ENCODE measurements at regions of chr3 and their contacts with region 1.

Region 1: DNA sequence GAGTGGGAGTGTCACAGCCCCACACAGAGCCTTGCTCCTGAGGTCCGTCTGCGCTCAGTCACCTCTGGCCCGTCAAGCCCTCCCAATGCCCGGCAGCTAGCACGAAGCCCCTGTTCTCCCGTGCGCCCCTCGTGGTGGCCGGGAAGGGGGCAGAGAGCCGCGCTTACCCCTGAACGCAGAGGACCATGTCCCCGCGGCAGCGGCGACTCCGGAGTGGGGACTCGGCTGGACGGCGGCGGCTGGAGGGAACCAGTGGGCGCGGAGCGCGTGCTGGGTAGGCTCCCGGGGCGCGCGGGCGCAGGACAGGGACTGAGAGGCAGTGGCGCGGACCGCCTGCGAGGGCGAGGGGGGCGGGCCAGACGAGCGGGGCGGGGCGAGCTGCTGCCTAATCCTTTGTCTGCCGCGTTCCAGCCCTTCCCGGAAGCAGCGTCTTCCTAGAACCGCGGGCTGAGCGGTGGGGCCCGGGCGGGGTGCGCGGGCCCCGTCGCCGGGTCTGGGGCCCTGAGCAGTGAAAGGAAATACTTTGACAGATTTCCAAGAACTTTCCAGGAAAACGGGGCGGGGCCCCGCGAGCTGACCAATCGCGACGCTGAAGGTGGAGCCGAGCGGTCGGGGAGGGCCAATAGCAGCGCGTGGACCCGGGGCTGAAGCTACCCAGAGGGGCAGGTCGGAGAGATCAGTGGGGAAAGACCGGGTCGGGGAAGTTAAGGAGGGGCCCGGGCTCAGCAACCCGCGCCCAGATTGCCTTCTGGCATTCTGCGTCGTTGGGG is at the start of gene CISH:
- DNase-seq: no peak
- ATAC-seq: peak; percentile 79
- H3K4me3 ChIP-seq: peak within 1 kb of the TSS; percentile 54 to 64
- H3K27ac ChIP-seq: peak within 1 kb of the TSS; percentile 62
- H3K4me1 ChIP-seq: peaks cover 14 to 37% of the 10 kb centered on the region in 2 experiments
- H3K27me3 ChIP-seq: no peaks in the 10 kb centered on the region
- CTCF ChIP-seq: peak in 2 of 3 experiments; percentile 44 to 56; a peak in 4 of 6 replicates
- POLR2A ChIP-seq: peak; percentile 31
- RAD21 ChIP-seq: no peak
- total RNA-seq, gene CISH: 4.5 TPM

Region 2: DNA sequence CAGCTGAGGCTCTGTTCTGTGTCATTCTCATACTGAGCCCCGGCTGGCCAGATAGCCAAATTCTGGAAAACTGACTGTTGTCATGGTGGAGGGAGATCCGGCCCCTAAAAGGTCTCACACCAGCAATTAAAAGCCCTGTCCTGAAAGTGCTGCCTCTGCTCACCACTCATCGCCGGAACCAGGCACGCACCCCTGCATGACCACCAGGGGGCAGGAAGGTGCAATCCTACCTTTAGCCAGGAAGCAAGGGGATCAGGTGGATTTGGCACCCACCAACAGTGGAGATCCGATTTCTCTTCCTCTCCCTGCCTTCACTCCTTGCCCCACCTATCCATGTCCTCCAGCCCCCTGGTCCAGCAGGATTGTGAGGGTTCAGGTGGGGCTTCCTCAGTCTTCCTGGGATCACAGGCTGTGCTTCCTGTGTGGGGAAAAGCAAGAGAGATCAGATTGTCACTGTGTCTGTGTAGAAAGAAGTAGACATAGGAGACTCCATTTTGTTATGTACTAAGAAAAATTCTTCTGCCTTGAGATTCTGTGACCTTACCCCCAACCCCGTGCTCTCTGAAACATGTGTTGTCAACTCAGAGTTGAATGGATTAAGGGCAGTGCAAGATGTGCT is 92.1 kb before region 1 on chr3:
- CTCF ChIA-PET with region 1: interaction called, 3 read pairs
- POLR2A ChIA-PET with region 1: no interaction called
- RAD21 ChIA-PET with region 1: no interaction called
- intact Hi-C with region 1: loop called (anchors 1 kb)
- DNase-seq: peak; percentile 60
- ATAC-seq: peak; percentile 97
- H3K4me3 ChIP-seq: no peak overlapping the region
- H3K27ac ChIP-seq: no peak overlapping the region
- H3K4me1 ChIP-seq: peaks cover 0 to 6% of the 10 kb centered on the region in 2 experiments; a peak in 1 of 4 replicates
- H3K27me3 ChIP-seq: peaks cover 7% of the 10 kb centered on the region; the same call in 1 of the 2 replicates
- CTCF ChIP-seq: peak; percentile 89 to 97 (median 97)
- POLR2A ChIP-seq: no peak
- RAD21 ChIP-seq: peak; percentile 76

Region 3: DNA sequence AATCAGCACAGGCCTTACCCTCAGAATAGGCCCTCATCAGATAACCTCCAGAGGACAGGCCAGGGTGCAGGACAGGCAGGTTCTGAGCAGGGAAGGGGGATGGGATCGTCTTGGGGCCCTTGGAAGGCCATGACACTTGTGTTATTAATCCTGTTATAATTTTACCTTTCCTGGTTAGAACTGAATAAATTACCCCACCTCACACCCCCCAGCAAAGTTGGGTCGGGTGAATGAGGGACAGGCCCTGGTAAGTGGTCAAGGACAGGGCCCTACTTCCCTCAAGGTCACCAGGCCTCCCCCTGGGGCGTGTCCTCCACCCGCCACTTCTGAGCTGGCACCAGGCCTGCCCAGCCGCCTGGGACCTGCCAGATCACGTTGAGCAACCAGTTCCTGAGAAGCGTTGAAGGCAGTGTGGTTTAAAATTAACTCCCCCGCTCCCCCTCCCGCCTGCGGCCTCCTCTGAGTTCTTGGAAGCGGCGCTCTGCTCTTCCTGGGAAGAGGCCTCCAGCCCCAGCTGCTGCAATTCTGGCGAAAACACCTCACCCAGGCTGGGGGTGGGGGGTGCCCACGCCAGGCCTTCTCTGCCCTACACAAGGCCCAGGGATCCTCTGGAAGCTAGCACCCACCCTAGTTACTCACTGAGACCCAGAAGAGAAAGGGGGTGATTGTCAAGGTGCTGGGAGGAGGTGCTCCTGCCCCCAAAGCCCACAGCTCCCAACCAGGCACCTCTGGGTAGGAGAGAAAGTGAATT is 10.6 kb before region 1 on chr3:
- CTCF ChIA-PET with region 1: interaction called, 18 read pairs
- POLR2A ChIA-PET with region 1: interaction called, 7 read pairs
- RAD21 ChIA-PET with region 1: interaction called, 3 to 7 read pairs
- intact Hi-C with region 1: no loop called
- DNase-seq: peak; percentile 77
- ATAC-seq: peak; percentile 81
- H3K4me3 ChIP-seq: peak overlapping the region; percentile 25 to 35
- H3K27ac ChIP-seq: peak overlapping the region; percentile 98
- H3K4me1 ChIP-seq: peaks cover 37 to 40% of the 10 kb centered on the region in 2 experiments
- H3K27me3 ChIP-seq: no peaks in the 10 kb centered on the region
- CTCF ChIP-seq: no peak
- POLR2A ChIP-seq: no peak
- RAD21 ChIP-seq: no peak

Region 4: DNA sequence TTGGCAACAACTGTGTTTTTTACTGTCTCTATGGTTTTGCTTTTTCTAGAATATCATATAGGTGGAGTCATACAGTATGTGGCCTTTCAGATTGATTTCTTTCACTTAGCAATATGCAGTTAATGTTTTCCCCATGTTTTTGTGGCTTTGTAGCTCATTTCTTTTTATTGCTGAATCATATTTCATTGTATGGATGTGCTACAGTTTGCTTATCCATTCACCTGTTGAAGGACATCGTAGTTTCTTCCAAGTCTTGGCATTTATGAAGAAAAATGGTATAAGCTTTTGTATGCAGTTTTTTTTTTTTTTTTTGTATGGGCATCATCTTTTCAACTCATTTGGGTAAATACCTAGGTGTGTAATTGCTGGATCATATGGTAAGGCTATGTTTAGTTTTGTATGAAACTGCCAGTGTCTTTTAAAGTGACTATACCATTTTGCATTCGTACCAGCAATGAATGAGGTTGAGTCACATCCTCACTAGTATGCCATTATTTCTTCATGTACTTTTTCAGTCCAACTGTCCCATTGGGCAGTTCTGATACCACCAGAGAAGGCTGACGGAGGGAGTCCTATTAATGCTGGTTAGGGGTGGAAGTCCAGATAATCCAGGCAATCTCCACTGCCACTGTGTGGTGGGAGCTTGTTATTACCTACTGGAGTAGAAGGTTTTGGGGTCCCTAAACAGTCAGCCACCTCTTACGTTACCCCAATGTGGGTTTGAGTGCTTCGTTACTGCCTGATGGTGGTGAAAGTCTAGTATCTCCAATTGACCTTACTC is 273.6 kb after region 1 on chr3:
- CTCF ChIA-PET with region 1: no interaction called
- POLR2A ChIA-PET with region 1: no interaction called
- RAD21 ChIA-PET with region 1: no interaction called
- intact Hi-C with region 1: loop called (anchors 5 kb)
- DNase-seq: no peak
- ATAC-seq: no peak; the same call in 1 of the 2 replicates
- H3K4me3 ChIP-seq: no peak overlapping the region
- H3K27ac ChIP-seq: no peak overlapping the region
- H3K4me1 ChIP-seq: no peaks in the 10 kb centered on the region
- H3K27me3 ChIP-seq: no peaks in the 10 kb centered on the region
- CTCF ChIP-seq: peak in 2 of 3 experiments; percentile 28 to 46; a peak in 2 of 6 replicates
- POLR2A ChIP-seq: no peak
- RAD21 ChIP-seq: peak; percentile 47; the same call in 1 of the 2 replicates

Region 5: DNA sequence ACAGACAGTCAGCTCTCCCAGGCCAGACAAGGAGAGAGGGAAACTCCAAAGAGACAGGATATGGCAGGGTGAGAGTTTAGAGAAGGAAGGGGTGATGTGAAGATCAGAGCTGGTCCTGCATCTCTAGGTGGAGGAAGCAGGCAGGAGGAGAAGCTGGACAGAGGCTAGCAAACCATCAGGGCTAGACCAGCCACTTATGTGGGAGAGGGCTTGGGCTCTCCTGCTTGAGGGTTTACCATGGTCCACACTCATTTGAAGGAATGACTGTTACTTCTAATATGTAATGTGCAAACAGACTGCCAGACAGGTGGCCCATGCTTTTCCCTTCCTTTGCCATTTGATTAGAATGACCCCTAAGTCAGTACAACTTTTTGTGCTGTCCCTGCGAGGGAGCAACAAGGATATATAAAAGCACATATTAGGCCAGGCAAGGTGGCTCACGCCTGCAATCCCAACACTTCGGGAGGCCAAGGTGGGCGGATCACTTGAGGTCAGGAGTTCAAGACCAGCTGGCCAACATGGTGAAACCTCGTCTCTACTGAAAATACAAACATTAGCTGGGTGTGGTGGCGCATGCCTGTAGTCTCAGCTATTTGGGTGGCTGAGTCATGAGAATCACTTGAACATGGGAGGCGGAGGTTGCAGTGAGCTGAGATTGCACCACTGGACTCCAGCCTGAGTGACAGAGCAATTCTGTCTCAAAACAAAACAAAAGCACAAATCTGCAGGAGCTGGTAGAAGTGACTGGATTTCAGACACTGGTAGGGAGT is 732.5 kb after region 1 on chr3:
- CTCF ChIA-PET with region 1: interaction called, 4 read pairs
- POLR2A ChIA-PET with region 1: no interaction called
- RAD21 ChIA-PET with region 1: no interaction called
- intact Hi-C with region 1: loop called (anchors 1 kb)
- DNase-seq: peak; percentile 53
- ATAC-seq: peak; percentile 62
- H3K4me3 ChIP-seq: peak overlapping the region in 1 of 2 experiments; percentile 32; a peak in 2 of 4 replicates
- H3K27ac ChIP-seq: peak overlapping the region; percentile 35; the same call in 1 of the 2 replicates
- H3K4me1 ChIP-seq: peaks cover 50 to 60% of the 10 kb centered on the region in 2 experiments
- H3K27me3 ChIP-seq: no peaks in the 10 kb centered on the region
- CTCF ChIP-seq: no peak
- POLR2A ChIP-seq: no peak
- RAD21 ChIP-seq: no peak

Region 6: DNA sequence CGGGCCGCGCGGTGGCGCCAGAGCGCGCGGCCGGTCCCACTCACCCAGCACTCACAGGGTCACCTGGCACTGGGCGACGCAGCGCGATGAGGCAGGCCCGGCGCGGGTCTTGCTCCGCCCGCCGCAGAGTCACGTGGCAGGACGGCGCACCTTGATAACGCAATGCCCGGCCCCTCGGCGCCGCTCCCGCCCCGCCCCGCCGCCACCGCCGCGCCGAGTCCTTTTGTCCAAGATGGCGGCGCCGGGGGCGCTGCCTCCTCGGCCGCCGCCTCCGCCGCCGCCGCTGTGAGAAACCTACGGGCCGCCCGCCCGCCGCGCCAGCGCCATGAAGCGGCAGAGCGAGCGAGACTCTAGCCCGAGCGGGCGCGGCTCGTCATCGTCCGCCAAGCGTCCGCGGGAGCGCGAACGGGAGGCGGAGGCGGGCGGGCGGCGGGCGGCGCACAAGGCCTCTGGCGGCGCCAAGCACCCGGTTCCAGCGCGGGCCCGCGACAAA is 779.5 kb after region 1 on chr3 and contains the start of gene RBM15B:
- CTCF ChIA-PET with region 1: interaction called, 10 read pairs
- POLR2A ChIA-PET with region 1: interaction called, 5 read pairs
- RAD21 ChIA-PET with region 1: no interaction called
- intact Hi-C with region 1: loop called (anchors 1 kb)
- DNase-seq: peak; percentile 92
- ATAC-seq: peak; percentile 91
- H3K4me3 ChIP-seq: peak within 1 kb of the TSS; percentile 57 to 59
- H3K27ac ChIP-seq: peak within 1 kb of the TSS; percentile 77
- H3K4me1 ChIP-seq: peaks cover 21 to 44% of the 10 kb centered on the region in 2 experiments; a peak in 3 of 4 replicates
- H3K27me3 ChIP-seq: no peaks in the 10 kb centered on the region
- CTCF ChIP-seq: peak in 1 of 3 experiments; percentile 84; a peak in 2 of 6 replicates
- POLR2A ChIP-seq: no peak
- RAD21 ChIP-seq: no peak
- total RNA-seq, gene RBM15B: 24.1 TPM

Region 7: DNA sequence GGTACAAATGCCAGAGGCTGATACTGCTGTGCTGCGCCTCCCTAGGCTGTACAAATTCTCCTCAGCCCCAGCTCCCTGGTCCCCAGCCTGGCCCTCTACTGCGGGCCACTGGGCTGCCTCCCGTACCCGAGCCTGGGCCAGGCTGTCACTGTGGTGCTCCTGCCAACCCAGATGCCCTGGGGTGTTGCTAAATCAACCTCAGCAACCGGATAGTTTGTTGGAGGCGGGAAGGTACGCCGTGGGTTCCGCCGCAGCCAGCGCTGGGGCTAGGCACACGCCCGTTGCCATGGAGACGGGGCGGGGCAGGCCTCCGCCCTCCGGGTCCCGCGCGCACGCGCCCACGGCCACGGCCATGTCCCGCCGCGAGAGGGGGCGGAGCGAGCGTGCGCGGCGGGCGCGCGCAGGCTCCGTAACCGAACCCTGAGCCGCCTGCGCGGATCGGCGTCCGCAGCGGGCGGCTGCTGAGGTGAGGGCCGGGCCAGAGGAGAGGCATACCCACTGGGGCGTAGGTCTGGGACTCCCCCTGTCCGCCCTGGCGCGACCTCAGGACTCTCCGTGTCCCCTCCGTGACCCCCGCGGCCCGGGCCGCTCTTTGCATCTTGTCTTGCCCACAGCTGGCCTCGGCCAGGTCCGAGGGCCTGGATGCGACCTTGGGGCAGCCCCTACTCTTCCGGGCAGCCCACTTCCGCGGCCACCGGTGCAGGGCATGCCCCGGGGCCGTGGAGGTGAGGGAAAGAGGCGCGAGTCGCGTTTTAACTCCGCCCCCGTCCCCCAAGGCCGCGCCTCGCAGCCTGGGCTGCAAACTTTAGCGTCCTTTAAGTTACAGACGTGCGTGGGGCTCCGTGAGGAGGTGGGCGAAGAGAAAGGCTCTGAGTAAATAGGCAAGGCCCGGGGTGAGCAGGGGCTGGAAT is 1059.4 kb after region 1 on chr3 and contains the start of gene TEX264:
- CTCF ChIA-PET with region 1: interaction called, 5 read pairs
- POLR2A ChIA-PET with region 1: no interaction called
- RAD21 ChIA-PET with region 1: no interaction called
- intact Hi-C with region 1: loop called (anchors 5 kb)
- DNase-seq: peak; percentile 37
- ATAC-seq: peak; percentile 76
- H3K4me3 ChIP-seq: peak within 1 kb of the TSS; percentile 85 to 92
- H3K27ac ChIP-seq: peak within 1 kb of the TSS; percentile 99
- H3K4me1 ChIP-seq: peaks cover 17 to 51% of the 10 kb centered on the region in 2 experiments
- H3K27me3 ChIP-seq: no peaks in the 10 kb centered on the region
- CTCF ChIP-seq: no peak
- POLR2A ChIP-seq: peak; percentile 92
- RAD21 ChIP-seq: no peak
- total RNA-seq, gene TEX264: 36.0 TPM

Measured in HCT116 (cell line).